Activated CD8-positive, alpha-beta T cell treated with anti-CD3 and anti-CD28 coated beads, Interleukin-2, amount 10 ng/mL, durations not matched to agents 7 days and 5 days (primary cell): ENCODE measurements at regions of chr11 and their contacts with region 1.

Region 1: GRCh38 chr11:12150831-12151382 is 40.5 kb downstream of the MICAL2 start:
- DNase-seq: peak; percentile 37
- ATAC-seq: peak; percentile 46
- H3K4me3 Mint-ChIP-seq: no peak overlapping the region
- H3K27ac Mint-ChIP-seq: peak overlapping the region; percentile 78
- H3K4me1 Mint-ChIP-seq: peaks cover 63% of the 10 kb centered on the region
- H3K27me3 Mint-ChIP-seq: no peaks in the 10 kb centered on the region

Region 2: DNA sequence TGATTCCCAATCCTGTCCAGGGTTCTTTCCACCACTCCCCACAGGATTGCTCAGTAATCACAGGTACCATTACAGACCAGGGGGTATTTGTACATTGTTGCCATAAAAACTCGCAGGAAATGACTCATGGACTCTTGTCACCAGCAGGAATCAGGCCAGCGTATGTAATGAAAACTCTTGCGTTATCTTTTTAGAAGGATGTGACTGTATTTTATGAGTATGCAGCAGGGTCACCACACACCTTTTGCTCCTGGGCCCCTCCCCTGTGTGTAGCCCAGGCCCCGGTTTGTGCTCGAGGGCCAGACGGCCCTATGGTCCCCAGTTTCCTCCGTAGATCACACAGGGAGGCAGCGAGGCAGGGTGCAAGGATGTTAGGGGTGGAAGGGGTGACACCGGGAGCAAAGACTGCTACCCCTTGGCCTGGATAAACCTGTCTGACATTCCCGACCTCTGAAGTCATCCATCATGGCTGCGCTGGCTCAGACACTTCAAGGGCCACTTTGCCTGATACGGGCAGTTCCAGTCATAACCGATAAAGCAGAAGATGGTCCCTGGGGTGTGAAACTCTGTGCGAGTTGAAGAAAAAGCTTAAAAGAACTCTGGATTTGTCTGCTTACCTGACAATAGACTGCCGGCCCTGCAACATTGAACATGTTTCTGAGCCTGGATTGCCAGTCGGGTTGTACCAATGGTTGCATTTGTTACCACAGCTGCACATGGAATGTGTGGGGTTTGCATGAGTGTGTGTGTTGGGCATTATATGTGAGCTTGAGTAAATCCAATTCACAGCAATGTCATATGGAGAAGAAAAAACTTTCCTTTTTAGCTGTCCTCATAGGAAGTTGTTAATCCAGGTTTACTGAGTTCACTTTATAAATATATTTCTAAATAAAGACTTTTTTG is 16.4 kb after region 1 on chr11:
- CTCF ChIA-PET with region 1: interaction called, 10 read pairs
- POLR2A ChIA-PET with region 1: interaction called, 9 read pairs
- DNase-seq: no peak
- ATAC-seq: peak; percentile 38
- H3K4me3 Mint-ChIP-seq: no peak overlapping the region
- H3K27ac Mint-ChIP-seq: no peak overlapping the region
- H3K4me1 Mint-ChIP-seq: peaks cover 29% of the 10 kb centered on the region
- H3K27me3 Mint-ChIP-seq: no peaks in the 10 kb centered on the region

Region 3: GRCh38 chr11:12200279-12201010 is 49.5 kb after region 1 on chr11:
- CTCF ChIA-PET with region 1: interaction called, 14 read pairs
- POLR2A ChIA-PET with region 1: interaction called, 4 read pairs
- DNase-seq: no peak
- ATAC-seq: no peak
- H3K4me3 Mint-ChIP-seq: no peak overlapping the region
- H3K27ac Mint-ChIP-seq: no peak overlapping the region
- H3K4me1 Mint-ChIP-seq: peaks cover 57% of the 10 kb centered on the region
- H3K27me3 Mint-ChIP-seq: no peaks in the 10 kb centered on the region

Region 4: GRCh38 chr11:12581923-12582322 is 431.0 kb after region 1 on chr11:
- CTCF ChIA-PET with region 1: no interaction called
- POLR2A ChIA-PET with region 1: no interaction called
- DNase-seq: no peak
- ATAC-seq: no peak
- H3K4me3 Mint-ChIP-seq: no peak overlapping the region
- H3K27ac Mint-ChIP-seq: no peak overlapping the region
- H3K4me1 Mint-ChIP-seq: no peaks in the 10 kb centered on the region
- H3K27me3 Mint-ChIP-seq: peaks cover 9% of the 10 kb centered on the region